BJ (cell line): ENCODE measurements at regions of chr6 and their contacts with region 1.

Region 1: GRCh38 chr6:1436334-1437306 is 47.2 kb downstream of the FOXF2 start:
- DNase-seq: peak; percentile 23
- H3K4me3 ChIP-seq: no peak overlapping the region
- H3K27me3 ChIP-seq: no peaks in the 10 kb centered on the region
- CTCF ChIP-seq: peak; percentile 73

Region 2: DNA sequence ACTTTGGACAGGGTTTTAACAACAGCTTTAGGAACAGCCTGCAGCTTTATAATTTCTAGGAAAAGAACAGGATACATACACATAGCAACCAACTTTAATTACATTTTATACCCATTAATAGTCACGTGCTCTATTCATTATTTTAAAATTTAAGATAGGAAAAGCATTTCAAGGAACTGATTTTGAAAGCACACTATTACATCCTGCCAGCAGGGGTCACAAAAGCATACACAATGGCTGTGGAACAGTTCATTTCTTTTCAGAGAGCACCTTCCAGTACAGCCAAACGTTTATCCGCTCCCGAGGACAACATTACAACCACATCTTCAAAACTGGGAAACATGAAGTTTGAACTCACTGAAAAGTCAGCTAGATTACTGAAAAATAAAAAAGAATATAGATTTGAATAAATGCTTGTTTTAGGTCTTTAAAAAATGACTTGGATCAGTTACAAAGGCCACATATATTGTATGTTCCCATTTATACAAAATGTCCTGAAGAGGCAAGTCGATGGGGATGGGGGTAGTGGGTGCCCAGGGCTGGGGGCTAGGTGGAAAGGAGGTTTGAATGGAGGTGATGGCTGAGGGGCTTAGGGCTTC is 639.0 kb before region 1 on chr6:
- CTCF ChIA-PET with region 1: interaction called, 23 read pairs
- POLR2A ChIA-PET with region 1: no interaction called
- DNase-seq: no peak
- H3K4me3 ChIP-seq: no peak overlapping the region
- H3K27me3 ChIP-seq: peaks cover 14% of the 10 kb centered on the region
- CTCF ChIP-seq: peak; percentile 69

Region 3: DNA sequence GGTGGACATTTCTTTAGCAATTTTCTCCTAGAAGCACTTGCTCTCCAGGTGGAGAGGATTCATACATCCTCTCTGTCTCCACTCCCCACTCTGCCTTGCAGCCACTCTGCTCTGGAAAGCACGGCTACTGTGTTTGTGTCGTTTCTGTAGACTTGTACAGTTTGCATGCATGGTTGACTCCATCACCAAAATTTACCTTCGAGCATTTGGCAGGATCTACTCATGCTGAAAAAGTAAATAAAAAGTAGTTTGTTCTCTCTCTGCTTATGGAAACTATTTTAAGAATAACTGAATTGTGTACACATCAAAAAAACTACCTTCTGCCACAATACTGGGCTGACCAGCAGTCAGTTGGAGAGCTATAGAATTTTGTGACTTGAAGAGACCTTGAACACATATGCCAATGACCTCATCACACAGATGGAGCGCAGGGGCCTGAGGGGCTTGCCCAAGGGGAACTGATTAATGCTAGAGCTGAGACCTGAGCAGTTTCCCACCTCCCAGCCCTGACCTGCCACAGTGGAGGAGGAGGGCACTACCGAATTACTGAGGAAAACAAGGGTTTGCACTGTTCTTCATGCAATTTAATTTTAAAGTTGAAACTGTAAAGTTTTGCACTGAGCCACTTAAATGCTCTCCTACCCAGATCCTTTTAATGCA is 158.4 kb before region 1 on chr6:
- CTCF ChIA-PET with region 1: no interaction called
- POLR2A ChIA-PET with region 1: no interaction called
- DNase-seq: no peak
- H3K4me3 ChIP-seq: no peak overlapping the region
- H3K27me3 ChIP-seq: no peaks in the 10 kb centered on the region; the same call in 1 of the 2 replicates
- CTCF ChIP-seq: no peak